Cardiac septum (tissue), 1 donor: ENCODE measurements at regions of chr3 and their contacts with region 1.

Region 1: DNA sequence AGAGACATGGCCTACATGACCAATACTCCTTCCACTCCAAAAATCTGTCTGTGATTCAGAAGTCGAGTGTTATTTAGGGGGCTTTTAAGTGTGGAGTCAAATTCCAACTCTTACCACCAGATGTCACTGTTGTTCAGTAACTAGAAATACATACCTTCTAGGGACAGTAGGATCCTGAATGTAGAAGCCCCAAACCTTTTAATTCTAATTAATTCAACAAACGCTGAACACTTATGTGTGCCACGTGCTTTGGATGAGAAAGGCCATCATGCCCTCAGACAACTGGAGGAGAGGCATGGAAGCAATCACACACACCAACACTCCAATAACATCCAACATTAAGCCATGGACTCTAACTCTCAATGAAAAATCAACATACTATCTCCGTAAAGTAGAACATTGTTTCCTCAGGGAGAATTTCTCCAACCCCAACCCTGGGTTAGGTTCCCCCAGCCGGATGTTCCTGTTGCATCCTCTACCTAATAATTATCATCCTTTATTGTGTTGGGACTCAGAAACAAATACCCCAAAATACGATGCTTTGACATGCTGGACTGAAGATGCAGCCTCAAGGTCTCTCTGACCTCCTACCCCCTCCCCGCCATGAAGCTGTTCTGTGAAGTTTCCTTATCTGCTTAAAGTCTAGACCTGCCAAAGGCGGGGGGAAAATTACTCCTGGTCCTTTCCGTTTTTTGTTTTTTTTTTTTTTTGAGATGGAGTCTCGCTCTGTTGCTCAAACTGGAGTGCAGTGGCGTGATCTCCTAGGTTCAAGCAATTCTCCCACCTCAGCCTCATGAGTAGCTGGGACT is 8.0 kb upstream of the CCDC13 start:
- DNase-seq: no peak

Region 2: GRCh38 chr3:42195879-42196330 is 585.2 kb before region 1 on chr3:
- intact Hi-C with region 1: no loop called
- DNase-seq: peak; percentile 41

Region 3: DNA sequence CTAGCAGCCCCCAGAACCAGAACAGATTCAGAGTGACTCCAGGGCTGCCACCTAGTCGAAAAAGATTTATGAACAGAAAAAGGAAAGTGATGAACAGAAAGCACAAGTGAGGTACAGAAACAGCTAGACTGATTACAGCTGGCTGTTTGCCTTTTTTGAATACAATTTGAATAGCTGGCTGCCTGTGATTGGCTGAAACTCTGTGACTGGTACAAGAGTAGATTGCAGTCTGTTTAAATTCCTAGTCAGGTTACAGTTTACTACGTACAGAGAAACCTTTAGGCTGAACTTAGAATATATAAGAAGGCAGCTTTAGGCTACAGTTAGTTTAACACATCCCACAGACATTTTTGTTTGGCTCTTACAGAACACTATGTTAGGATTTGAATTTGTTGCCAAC is 18.1 kb before region 1 on chr3:
- intact Hi-C with region 1: no loop called
- DNase-seq: no peak

Region 4: GRCh38 chr3:42839616-42840015 is 58.5 kb after region 1 on chr3:
- intact Hi-C with region 1: loop called (anchors 5 kb)
- DNase-seq: no peak